ENCODE measurements at regions of chr18 and their contacts with region 1.

Region 1: DNA sequence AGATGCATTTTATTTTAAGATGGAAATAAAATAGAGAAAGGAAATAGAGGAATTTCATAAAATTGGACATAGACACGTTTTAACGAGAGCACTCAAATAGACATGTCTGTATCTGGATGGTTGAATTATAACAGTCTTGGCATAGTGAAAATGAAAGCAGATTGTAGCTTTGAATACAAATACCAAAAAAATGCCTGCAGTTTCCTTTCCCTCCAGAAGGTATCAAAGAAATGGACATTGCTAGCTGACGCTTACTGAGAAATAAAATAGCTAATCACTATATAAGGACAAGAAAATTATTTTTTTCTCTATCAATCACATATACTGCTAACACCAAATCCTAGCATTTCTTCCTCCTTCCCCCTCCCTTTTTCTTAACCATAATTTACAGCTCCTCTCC is 11.4 kb upstream of the MAPRE2 start:
- DNase-seq: no peak
- ATAC-seq: peak; percentile 70
- H3K4me3 Mint-ChIP-seq: peak overlapping the region; percentile 83
- H3K27ac Mint-ChIP-seq: peak overlapping the region; percentile 95
- H3K4me1 Mint-ChIP-seq: peaks cover 43% of the 10 kb centered on the region
- H3K27me3 Mint-ChIP-seq: no peaks in the 10 kb centered on the region

Region 2: DNA sequence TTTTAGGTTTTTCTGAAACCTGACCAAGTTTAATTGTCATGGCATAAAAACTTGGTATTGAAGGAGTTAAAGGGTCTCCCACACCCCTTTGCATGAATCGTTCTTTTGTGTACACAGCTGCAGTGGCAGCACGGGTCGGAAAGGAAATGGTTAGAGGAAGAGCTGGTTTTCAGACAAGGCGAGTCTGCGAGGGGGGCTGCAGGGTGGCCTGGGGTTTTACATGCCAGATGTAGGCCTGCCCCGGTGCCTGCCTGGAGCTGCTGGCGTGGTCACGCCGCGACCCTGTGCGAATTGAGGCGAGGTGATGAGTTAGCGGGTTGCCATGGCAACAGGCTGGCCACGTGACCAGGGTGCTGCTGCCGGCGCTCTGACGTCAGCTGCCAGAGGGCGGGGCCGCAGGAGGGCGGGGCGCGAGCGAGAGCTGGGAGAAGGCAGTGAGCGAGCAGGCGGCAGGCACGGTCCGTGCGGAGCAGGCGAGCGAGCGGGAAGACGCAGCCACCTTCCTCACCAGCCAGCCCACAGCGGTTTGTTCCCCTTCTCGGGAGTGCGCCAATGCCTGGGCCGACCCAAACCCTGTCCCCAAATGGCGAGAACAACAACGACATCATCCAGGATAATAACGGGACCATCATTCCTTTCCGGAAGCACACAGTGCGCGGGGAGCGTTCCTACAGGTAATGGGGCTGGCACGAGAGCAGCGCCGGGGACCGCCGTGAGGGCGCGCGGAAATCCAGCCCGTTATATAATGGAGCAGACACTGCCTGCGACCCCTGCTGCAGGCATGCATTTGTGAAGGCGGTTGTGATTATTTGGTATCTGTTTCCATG is 11.4 kb after region 1 on chr18 and contains the start of gene MAPRE2:
- POLR2A ChIA-PET with region 1: interaction called, 119 read pairs
- DNase-seq: peak; percentile 100
- ATAC-seq: peak; percentile 80
- H3K4me3 Mint-ChIP-seq: peak within 1 kb of the TSS; percentile 89
- H3K27ac Mint-ChIP-seq: peak within 1 kb of the TSS; percentile 97
- H3K4me1 Mint-ChIP-seq: peaks cover 42% of the 10 kb centered on the region
- H3K27me3 Mint-ChIP-seq: peaks cover 1% of the 10 kb centered on the region
- total RNA-seq, gene MAPRE2: 61.5 to 63.2 TPM

Region 3: DNA sequence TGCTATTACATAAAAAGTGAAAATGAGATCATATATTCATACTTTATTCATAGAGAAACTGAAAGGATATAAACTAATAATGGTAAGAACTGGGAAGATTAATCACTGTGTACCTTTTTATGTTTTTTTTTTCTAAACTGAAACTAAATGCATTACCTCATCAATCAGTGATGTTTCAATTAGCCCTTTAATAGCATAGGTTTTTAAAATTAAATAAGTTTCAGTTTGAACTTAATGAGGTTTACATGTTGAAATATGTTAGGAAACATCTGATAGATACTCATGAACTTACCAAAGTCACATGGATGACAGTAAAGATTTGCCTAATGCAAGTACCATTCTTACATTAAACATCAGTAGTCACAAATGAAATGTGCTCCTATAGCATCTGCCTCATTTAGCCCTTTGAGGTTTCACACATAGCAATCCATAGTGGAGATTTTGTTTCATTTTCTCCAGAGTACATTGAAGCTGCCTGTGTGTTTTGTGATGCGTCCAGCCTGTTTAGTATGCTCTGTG is 20.3 kb after region 1 on chr18:
- POLR2A ChIA-PET with region 1: interaction called, 13 read pairs
- DNase-seq: no peak
- ATAC-seq: peak; percentile 57
- H3K4me3 Mint-ChIP-seq: peak overlapping the region; percentile 85
- H3K27ac Mint-ChIP-seq: peak overlapping the region; percentile 97
- H3K4me1 Mint-ChIP-seq: peaks cover 59% of the 10 kb centered on the region
- H3K27me3 Mint-ChIP-seq: no peaks in the 10 kb centered on the region